ENCODE measurements at regions of chr11 and their contacts with region 1.

Region 1: GRCh38 chr11:2002807-2003206 is 5.2 kb upstream of the H19 start:
- DNase-seq: no peak
- H3K4me3 Mint-ChIP-seq: no peak overlapping the region
- H3K27ac Mint-ChIP-seq: no peak overlapping the region
- H3K4me1 Mint-ChIP-seq: no peaks in the 10 kb centered on the region
- H3K27me3 Mint-ChIP-seq: no peaks in the 10 kb centered on the region

Region 2: GRCh38 chr11:1694064-1694845 is 308.6 kb before region 1 on chr11:
- CTCF ChIA-PET with region 1: interaction called, 42 read pairs
- POLR2A ChIA-PET with region 1: interaction called, 3 read pairs
- DNase-seq: peak; percentile 79
- H3K4me3 Mint-ChIP-seq: no peak overlapping the region
- H3K27ac Mint-ChIP-seq: no peak overlapping the region
- H3K4me1 Mint-ChIP-seq: peaks cover 4% of the 10 kb centered on the region
- H3K27me3 Mint-ChIP-seq: peaks cover 38% of the 10 kb centered on the region

Region 3: DNA sequence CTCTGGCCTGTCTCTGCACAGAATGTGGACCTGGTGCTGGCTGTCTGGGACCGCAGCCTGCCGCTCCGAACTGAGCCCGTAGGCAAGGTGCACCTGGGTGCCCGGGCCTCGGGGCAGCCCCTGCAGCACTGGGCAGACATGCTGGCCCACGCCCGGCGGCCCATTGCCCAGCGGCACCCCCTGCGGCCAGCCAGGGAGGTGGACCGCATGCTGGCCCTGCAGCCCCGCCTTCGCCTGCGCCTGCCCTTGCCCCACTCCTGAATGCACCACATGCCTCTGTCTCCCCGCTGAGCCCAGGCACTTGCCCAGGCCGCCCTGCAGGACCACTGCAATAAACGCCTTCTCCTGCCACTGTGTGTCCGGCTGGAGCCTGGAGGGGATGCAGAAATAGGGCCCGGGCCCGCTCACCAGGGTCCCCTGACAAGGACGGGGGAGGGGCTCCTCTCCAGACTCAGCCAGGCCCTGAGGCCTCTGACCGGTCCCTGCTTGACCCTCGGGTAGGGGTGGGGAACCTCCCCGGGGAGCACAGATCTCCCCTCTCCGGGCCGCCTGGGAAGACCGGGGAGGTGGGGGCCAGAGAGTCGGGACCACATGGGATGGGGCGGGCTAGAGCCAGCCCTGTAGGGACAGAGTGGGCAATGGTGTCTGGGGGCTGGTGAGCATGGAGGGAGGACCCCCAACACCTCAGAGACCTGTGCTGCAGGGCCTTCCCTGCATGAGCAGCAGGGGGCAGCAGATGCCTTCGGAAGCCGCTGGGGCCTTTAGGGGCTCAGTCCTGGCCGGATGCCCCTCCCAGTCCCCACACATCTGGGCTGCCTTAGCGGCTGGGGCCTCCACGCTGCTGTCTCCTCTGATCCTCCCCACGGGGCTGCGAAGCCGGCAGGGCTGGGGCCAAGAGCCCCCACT is 165.4 kb before region 1 on chr11:
- CTCF ChIA-PET with region 1: interaction called, 34 read pairs
- POLR2A ChIA-PET with region 1: interaction called, 3 read pairs
- DNase-seq: peak; percentile 85
- H3K4me3 Mint-ChIP-seq: no peak overlapping the region
- H3K27ac Mint-ChIP-seq: no peak overlapping the region
- H3K4me1 Mint-ChIP-seq: peaks cover 10% of the 10 kb centered on the region
- H3K27me3 Mint-ChIP-seq: peaks cover 3% of the 10 kb centered on the region

Region 4: DNA sequence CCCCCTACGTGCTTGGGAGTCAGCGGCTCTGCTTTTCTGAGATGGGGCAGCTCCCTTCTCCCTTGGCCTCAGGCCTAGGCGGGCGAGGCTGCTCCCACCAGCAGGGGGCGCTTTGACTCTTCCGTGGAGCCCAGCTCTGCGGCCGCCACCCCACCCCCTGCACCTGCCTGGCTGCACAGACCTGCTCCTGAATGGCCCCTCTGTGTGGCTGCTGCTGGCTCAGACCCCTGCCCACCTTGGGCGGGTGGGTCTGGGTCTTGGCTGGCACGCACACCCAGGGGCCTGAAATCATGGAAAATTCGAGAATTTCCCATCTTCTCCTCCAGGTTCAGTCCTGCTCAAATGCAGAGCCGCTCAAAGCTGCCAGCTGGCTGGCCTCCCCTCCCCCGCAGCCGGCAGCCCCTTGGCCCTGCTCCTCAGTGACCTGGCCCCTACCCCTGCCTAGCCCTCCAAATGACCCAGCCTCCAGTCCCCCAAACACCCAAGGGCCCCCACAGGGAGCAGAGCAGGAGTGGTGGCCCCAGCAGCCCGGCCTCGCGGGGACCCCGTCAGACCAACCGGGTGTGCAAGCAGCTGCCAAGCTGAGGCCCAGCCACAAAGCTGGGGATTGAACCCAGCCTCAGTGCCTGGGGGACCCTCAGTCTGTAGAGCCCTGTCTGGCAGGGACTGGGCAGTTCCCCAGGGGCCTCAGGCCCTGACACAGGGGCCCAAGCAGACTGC is 120.1 kb before region 1 on chr11:
- CTCF ChIA-PET with region 1: interaction called, 21 read pairs
- POLR2A ChIA-PET with region 1: no interaction called
- DNase-seq: peak; percentile 75
- H3K4me3 Mint-ChIP-seq: no peak overlapping the region
- H3K27ac Mint-ChIP-seq: no peak overlapping the region
- H3K4me1 Mint-ChIP-seq: peaks cover 12% of the 10 kb centered on the region
- H3K27me3 Mint-ChIP-seq: no peaks in the 10 kb centered on the region

Region 5: DNA sequence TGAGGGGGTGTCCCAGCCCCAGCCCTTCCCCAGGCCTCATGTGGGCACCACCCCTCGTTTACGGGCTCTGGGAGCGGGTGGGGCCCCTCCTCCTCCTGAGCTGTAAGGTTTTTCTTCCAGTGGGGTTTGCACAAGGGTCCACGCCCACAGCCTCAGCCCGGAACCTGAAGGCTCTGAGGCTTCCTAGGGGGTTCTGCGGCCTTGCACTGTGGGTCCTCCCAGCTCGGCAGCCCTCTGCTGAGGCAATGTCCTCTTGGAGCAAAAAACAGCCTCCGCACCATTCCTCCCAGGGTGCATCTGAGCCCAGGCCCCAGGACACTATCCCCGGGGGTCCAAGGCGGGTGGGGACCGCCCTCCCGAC is 19.2 kb before region 1 on chr11:
- CTCF ChIA-PET with region 1: no interaction called
- POLR2A ChIA-PET with region 1: no interaction called
- DNase-seq: no peak
- H3K4me3 Mint-ChIP-seq: no peak overlapping the region
- H3K27ac Mint-ChIP-seq: no peak overlapping the region
- H3K4me1 Mint-ChIP-seq: no peaks in the 10 kb centered on the region
- H3K27me3 Mint-ChIP-seq: no peaks in the 10 kb centered on the region

Region 6: DNA sequence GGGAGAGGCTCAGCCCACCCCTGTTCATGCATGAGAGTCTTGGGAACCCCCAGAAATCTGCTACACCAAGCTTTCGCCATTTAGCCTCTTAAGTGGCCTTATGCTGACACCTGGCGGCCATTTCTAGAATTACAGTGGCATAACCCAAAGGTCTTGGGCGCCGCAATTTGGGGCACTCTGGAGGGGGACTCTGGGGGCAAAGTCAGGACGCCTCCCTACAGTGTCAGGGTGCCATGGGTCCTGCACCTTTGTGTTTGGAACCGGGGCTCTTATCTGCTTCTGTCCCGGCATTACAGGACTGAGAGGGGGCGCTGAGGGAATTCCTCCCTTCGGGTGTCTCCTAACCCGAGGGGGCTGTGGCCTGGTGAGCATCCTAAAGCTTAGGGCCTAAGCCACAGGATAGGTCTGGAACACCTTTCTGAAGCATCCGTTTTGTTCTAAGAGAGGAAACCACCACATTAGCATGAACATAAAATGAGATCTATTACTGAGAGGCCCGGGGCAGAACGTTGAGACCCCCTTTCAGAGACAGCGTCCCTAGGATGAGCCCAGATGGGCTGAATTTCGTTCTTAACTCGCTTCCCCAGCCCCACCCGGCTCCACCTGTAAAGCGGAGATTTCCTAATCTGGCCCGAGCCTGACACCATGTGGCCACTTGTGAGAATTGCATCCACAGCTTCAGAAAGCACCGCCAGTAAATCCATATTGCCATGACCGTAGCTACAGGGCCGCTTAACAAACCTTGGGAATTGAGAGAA is 148.9 kb after region 1 on chr11:
- CTCF ChIA-PET with region 1: interaction called, 14 read pairs
- POLR2A ChIA-PET with region 1: no interaction called
- DNase-seq: peak; percentile 82
- H3K4me3 Mint-ChIP-seq: no peak overlapping the region
- H3K27ac Mint-ChIP-seq: no peak overlapping the region
- H3K4me1 Mint-ChIP-seq: peaks cover 6% of the 10 kb centered on the region
- H3K27me3 Mint-ChIP-seq: peaks cover 38% of the 10 kb centered on the region

Measured in activated CD4-positive, alpha-beta memory T cell treated with anti-CD3 and anti-CD28 coated beads, Interleukin-2, amount 10 ng/mL, durations not matched to agents 7 days and 5 days (primary cell).